ENCODE measurements at regions of chr16 and their contacts with region 1.

Region 1: GRCh38 chr16:96935-97381 is 18.9 kb downstream of the MPG start:
- DNase-seq: peak; percentile 81 to 94 (median 87)
- ATAC-seq: peak; percentile 100
- H3K4me3 ChIP-seq: no peak overlapping the region
- H3K4me3 Mint-ChIP-seq: no peak overlapping the region
- H3K27ac ChIP-seq: no peak overlapping the region
- H3K27ac Mint-ChIP-seq: no peak overlapping the region
- H3K4me1 ChIP-seq: peaks cover 9% of the 10 kb centered on the region
- H3K4me1 Mint-ChIP-seq: peaks cover 6% of the 10 kb centered on the region
- H3K27me3 ChIP-seq: no peaks in the 10 kb centered on the region
- H3K27me3 Mint-ChIP-seq: no peaks in the 10 kb centered on the region
- CTCF ChIP-seq: peak; percentile 95

Region 2: DNA sequence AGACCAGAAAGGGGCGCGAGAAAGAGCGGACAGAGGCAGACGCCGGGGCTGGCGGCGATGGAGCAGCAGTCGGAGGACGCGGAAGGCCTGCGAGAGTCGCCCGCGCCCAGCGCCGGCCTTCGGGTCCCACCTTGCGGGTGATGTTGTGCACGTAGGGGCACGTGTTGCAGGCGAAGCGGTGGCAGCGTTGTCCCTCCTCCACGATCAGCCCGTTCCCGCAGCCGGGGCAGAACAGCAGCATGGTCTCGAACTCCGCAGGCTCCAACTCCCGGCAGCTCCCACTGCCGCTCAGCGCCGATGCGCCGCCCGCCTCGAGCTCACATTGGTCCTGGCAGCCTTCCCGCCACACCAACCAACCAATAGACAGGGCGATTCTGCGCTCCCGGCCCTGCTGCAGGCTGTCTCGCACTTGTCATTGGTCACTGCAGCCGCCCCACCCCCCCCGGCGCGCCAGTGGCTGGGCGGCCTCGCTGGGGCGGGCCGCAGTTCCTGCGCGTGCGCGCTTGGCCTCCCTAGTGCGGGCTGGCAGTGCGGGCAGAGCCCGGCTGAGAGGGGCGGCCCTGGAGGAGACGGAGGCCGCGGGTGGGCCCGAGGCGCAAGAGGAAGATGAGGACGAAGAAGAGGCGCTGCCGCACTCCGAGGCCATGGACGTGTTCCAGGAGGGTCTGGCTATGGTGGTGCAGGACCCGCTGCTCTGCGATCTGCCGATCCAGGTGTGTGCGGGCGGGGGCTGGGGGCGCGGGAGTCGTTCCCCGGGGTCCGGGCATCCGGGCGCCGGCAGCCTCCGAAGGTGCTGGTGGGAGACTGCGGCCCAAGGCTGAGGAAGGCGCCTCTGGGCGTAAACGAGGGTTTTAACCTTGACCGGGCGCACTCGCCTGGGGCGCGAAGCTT is 43.4 kb before region 1 on chr16 and contains the starts of genes POLR3K and SNRNP25:
- CTCF ChIA-PET with region 1: interaction called, 21 read pairs
- POLR2A ChIA-PET with region 1: interaction called, 4 read pairs
- intact Hi-C with region 1: no loop called
- DNase-seq: peak; percentile 95 to 99 (median 98)
- ATAC-seq: peak; percentile 95
- H3K4me3 ChIP-seq: peak within 1 kb of the TSS; percentile 86
- H3K4me3 Mint-ChIP-seq: peak within 1 kb of the TSS; percentile 94
- H3K27ac ChIP-seq: peak within 1 kb of the TSS; percentile 25 to 31
- H3K27ac Mint-ChIP-seq: peak within 1 kb of the TSS; percentile 72
- H3K4me1 ChIP-seq: peaks cover 33% of the 10 kb centered on the region
- H3K4me1 Mint-ChIP-seq: peaks cover 32% of the 10 kb centered on the region
- H3K27me3 ChIP-seq: no peaks in the 10 kb centered on the region
- H3K27me3 Mint-ChIP-seq: no peaks in the 10 kb centered on the region
- CTCF ChIP-seq: no peak
- total RNA-seq, gene POLR3K: 4.1 TPM
- total RNA-seq, gene SNRNP25: 4.8 to 5.1 TPM

Region 3: GRCh38 chr16:65671-66137 is 31.3 kb before region 1 on chr16:
- CTCF ChIA-PET with region 1: interaction called, 105 read pairs
- POLR2A ChIA-PET with region 1: interaction called, 6 read pairs
- intact Hi-C with region 1: loop called (anchors 1 kb)
- DNase-seq: peak; percentile 71 to 88 (median 80)
- ATAC-seq: peak; percentile 99
- H3K4me3 ChIP-seq: no peak overlapping the region
- H3K4me3 Mint-ChIP-seq: no peak overlapping the region
- H3K27ac ChIP-seq: no peak overlapping the region
- H3K27ac Mint-ChIP-seq: no peak overlapping the region
- H3K4me1 ChIP-seq: peaks cover 6% of the 10 kb centered on the region
- H3K4me1 Mint-ChIP-seq: no peaks in the 10 kb centered on the region
- H3K27me3 ChIP-seq: peaks cover 5 to 10% of the 10 kb centered on the region in 2 experiments
- H3K27me3 Mint-ChIP-seq: peaks cover 33% of the 10 kb centered on the region
- CTCF ChIP-seq: peak; percentile 88

Region 4: GRCh38 chr16:72561-73548 is 24.1 kb before region 1 on chr16 and contains the start of gene RHBDF1:
- CTCF ChIA-PET with region 1: interaction called, 13 read pairs
- POLR2A ChIA-PET with region 1: interaction called, 5 read pairs
- intact Hi-C with region 1: no loop called
- DNase-seq: peak in 1 of 14 experiments; percentile 37
- ATAC-seq: no peak
- H3K4me3 ChIP-seq: no peak within 1 kb of the TSS
- H3K4me3 Mint-ChIP-seq: peak within 1 kb of the TSS; percentile 36
- H3K27ac ChIP-seq: no peak within 1 kb of the TSS
- H3K27ac Mint-ChIP-seq: no peak within 1 kb of the TSS
- H3K4me1 ChIP-seq: peaks cover 31% of the 10 kb centered on the region
- H3K4me1 Mint-ChIP-seq: peaks cover 26% of the 10 kb centered on the region
- H3K27me3 ChIP-seq: peaks cover 19 to 39% of the 10 kb centered on the region in 2 experiments
- H3K27me3 Mint-ChIP-seq: peaks cover 52% of the 10 kb centered on the region
- CTCF ChIP-seq: no peak
- total RNA-seq, gene RHBDF1: 0.33 to 0.34 TPM

Region 5: GRCh38 chr16:77807-78443 is 19.0 kb before region 1 on chr16 and contains the start of gene MPG:
- CTCF ChIA-PET with region 1: interaction called, 13 read pairs
- POLR2A ChIA-PET with region 1: interaction called, 5 read pairs
- intact Hi-C with region 1: no loop called
- DNase-seq: peak; percentile 62 to 89 (median 80)
- ATAC-seq: peak; percentile 88
- H3K4me3 ChIP-seq: peak within 1 kb of the TSS; percentile 73
- H3K4me3 Mint-ChIP-seq: peak within 1 kb of the TSS; percentile 91
- H3K27ac ChIP-seq: peak within 1 kb of the TSS in 1 of 2 donors; percentile 40
- H3K27ac Mint-ChIP-seq: peak within 1 kb of the TSS; percentile 77
- H3K4me1 ChIP-seq: peaks cover 34% of the 10 kb centered on the region
- H3K4me1 Mint-ChIP-seq: peaks cover 28% of the 10 kb centered on the region
- H3K27me3 ChIP-seq: peaks cover 7 to 13% of the 10 kb centered on the region in 2 experiments
- H3K27me3 Mint-ChIP-seq: peaks cover 20% of the 10 kb centered on the region
- CTCF ChIP-seq: no peak
- total RNA-seq, gene MPG: 14.1 to 17.1 TPM